ENCODE measurements at regions of chr1 and their contacts with region 1.

Region 1: DNA sequence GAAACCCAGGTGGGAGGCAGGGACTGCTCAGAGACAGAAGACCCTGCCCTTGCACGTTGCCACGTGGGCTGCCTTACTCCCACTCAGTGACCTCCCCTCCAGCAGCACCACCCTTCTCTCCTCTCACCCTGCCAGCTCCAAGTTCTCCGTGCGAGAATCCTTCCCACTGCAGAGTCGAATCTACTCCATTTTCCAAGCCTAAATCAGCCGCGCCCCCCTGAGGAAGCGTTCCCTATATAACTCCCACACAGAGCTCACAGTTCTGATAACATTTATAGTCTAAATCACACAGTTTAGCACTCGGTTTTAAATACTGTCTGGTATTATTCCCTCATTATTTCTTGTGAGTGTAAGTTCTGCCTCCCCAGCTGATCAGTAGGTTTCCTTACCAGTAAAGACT is 7.7 kb downstream of the LRRN2 start:
- DNase-seq: no peak
- H3K4me3 ChIP-seq: no peak overlapping the region
- H3K27ac ChIP-seq: no peak overlapping the region
- H3K4me1 ChIP-seq: no peaks in the 10 kb centered on the region
- H3K27me3 ChIP-seq: no peaks in the 10 kb centered on the region
- CTCF ChIP-seq: no peak

Region 2: GRCh38 chr1:204600968-204601367 is 76.9 kb before region 1 on chr1:
- CTCF ChIA-PET with region 1: no interaction called
- dilution Hi-C with region 1: loop called (anchors 5 kb)
- in situ Hi-C with region 1: no loop called
- intact Hi-C with region 1: no loop called
- DNase-seq: no peak
- H3K4me3 ChIP-seq: no peak overlapping the region
- H3K27ac ChIP-seq: no peak overlapping the region
- H3K4me1 ChIP-seq: no peaks in the 10 kb centered on the region
- H3K27me3 ChIP-seq: no peaks in the 10 kb centered on the region
- CTCF ChIP-seq: peak; percentile 20 to 29

Measured in mammary epithelial cell (primary cell).